ENCODE measurements at regions of chr6 and their contacts with region 1.

Region 1: GRCh38 chr6:5302995-5303622 is 41.8 kb downstream of the FARS2 start:
- DNase-seq: peak; percentile 78
- ATAC-seq: peak; percentile 68
- H3K4me3 Mint-ChIP-seq: peak overlapping the region; percentile 43
- H3K27ac Mint-ChIP-seq: peak overlapping the region; percentile 84
- H3K4me1 Mint-ChIP-seq: peaks cover 54% of the 10 kb centered on the region
- H3K27me3 Mint-ChIP-seq: no peaks in the 10 kb centered on the region

Region 2: GRCh38 chr6:5214570-5215052 is 88.5 kb before region 1 on chr6:
- CTCF ChIA-PET with region 1: interaction called, 12 read pairs
- POLR2A ChIA-PET with region 1: no interaction called
- intact Hi-C with region 1: loop called in 1 of 2 experiments (anchors 1 kb)
- DNase-seq: peak; percentile 66
- ATAC-seq: peak; percentile 65
- H3K4me3 Mint-ChIP-seq: no peak overlapping the region
- H3K27ac Mint-ChIP-seq: no peak overlapping the region
- H3K4me1 Mint-ChIP-seq: peaks cover 10% of the 10 kb centered on the region
- H3K27me3 Mint-ChIP-seq: no peaks in the 10 kb centered on the region

Region 3: GRCh38 chr6:5279891-5280338 is 23.2 kb before region 1 on chr6:
- CTCF ChIA-PET with region 1: interaction called, 11 read pairs
- POLR2A ChIA-PET with region 1: interaction called, 9 read pairs
- intact Hi-C with region 1: loop called (anchors 1 kb)
- DNase-seq: peak; percentile 71
- ATAC-seq: peak; percentile 92
- H3K4me3 Mint-ChIP-seq: peak overlapping the region; percentile 10
- H3K27ac Mint-ChIP-seq: peak overlapping the region; percentile 91
- H3K4me1 Mint-ChIP-seq: peaks cover 43% of the 10 kb centered on the region
- H3K27me3 Mint-ChIP-seq: no peaks in the 10 kb centered on the region

Region 4: DNA sequence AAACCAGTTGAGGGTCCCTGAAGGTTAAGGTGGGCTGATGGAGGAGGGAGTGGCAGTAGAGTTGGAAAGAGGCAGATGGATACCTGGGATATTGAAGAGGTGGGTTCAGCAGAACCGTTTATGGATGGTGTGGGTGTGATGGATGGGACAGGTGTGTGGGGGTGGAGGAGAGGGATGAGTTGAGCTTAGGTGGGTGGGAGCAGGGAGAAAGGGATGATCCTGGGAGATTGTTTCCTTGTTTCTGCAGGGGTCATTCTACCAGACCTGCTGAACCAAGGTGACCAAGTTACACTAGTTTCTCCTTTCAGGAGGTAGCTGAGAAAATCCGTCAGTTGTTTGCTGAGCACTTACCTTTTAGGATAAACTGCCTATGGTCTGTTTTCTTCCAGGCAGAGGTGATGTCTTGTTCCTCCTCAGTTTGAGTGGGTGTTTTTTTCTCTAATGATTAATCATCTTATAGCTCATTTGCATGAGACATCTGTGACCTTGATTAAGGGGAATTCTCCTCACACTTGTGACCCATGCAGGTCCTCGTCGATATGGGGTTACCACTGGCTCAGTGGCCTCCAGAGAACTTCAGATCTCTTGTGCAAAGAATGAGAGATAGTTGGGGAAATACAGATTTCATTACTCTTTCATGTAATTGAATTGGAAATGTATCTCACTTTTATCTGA is 11.2 kb after region 1 on chr6:
- CTCF ChIA-PET with region 1: interaction called, 19 read pairs
- POLR2A ChIA-PET with region 1: no interaction called
- intact Hi-C with region 1: no loop called
- DNase-seq: no peak
- ATAC-seq: peak; percentile 68
- H3K4me3 Mint-ChIP-seq: no peak overlapping the region
- H3K27ac Mint-ChIP-seq: peak overlapping the region; percentile 11
- H3K4me1 Mint-ChIP-seq: peaks cover 12% of the 10 kb centered on the region
- H3K27me3 Mint-ChIP-seq: no peaks in the 10 kb centered on the region